ENCODE measurements at regions of chr1 and their contacts with region 1.

Region 1: GRCh38 chr1:207868774-207869721 is 41.9 kb downstream of the CD34 start:
- DNase-seq: peak; percentile 82
- ATAC-seq: peak; percentile 49
- H3K4me3 Mint-ChIP-seq: peak overlapping the region; percentile 90
- H3K27ac Mint-ChIP-seq: peak overlapping the region; percentile 94
- H3K4me1 Mint-ChIP-seq: peaks cover 84% of the 10 kb centered on the region
- H3K27me3 Mint-ChIP-seq: no peaks in the 10 kb centered on the region

Region 2: DNA sequence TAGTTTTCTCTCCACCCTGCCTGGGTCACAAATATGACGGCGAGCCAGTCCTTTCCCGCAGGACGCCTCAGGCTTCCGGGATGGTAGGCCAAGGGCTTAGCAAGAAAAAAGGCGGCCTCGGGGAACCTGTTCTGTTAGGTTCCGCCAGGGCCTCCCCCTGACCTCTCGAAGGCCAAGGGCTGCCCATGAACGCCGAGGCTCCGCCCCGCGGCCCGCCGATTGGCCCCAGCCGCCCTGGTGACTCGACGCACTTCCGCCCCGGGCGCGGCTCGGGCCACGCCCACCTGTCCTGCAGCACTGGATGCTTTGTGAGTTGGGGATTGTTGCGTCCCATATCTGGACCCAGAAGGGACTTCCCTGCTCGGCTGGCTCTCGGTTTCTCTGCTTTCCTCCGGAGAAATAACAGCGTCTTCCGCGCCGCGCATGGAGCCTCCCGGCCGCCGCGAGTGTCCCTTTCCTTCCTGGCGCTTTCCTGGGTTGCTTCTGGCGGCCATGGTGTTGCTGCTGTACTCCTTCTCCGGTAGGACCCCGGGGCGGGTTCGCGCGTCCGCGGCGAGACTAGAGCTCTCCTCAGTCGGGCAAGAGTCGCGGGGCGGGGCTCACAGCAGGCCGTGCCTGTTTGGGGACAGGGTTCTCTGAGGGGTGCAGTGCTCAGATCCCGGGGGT is 117.1 kb before region 1 on chr1 and contains the start of gene CD46:
- CTCF ChIA-PET with region 1: no interaction called
- POLR2A ChIA-PET with region 1: no interaction called
- intact Hi-C with region 1: loop called in 1 of 2 experiments (anchors 2 kb)
- DNase-seq: peak; percentile 97
- ATAC-seq: peak; percentile 97
- H3K4me3 Mint-ChIP-seq: peak within 1 kb of the TSS; percentile 99
- H3K27ac Mint-ChIP-seq: peak within 1 kb of the TSS; percentile 97
- H3K4me1 Mint-ChIP-seq: peaks cover 62% of the 10 kb centered on the region
- H3K27me3 Mint-ChIP-seq: no peaks in the 10 kb centered on the region
- total RNA-seq, gene CD46: 92.2 to 92.7 TPM

Region 3: GRCh38 chr1:207848234-207848633 is 20.8 kb before region 1 on chr1:
- CTCF ChIA-PET with region 1: interaction called, 5 read pairs
- POLR2A ChIA-PET with region 1: interaction called, 4 read pairs
- intact Hi-C with region 1: loop called in 1 of 2 experiments (anchors 2 kb)
- DNase-seq: peak; percentile 82
- ATAC-seq: peak; percentile 96
- H3K4me3 Mint-ChIP-seq: no peak overlapping the region
- H3K27ac Mint-ChIP-seq: peak overlapping the region; percentile 87
- H3K4me1 Mint-ChIP-seq: peaks cover 74% of the 10 kb centered on the region
- H3K27me3 Mint-ChIP-seq: no peaks in the 10 kb centered on the region

Region 4: GRCh38 chr1:207910591-207911354 is 41.7 kb after region 1 on chr1 and contains the start of gene CD34:
- CTCF ChIA-PET with region 1: interaction called, 5 read pairs
- POLR2A ChIA-PET with region 1: interaction called, 11 read pairs
- intact Hi-C with region 1: no loop called
- DNase-seq: peak; percentile 60
- ATAC-seq: peak; percentile 72
- H3K4me3 Mint-ChIP-seq: peak within 1 kb of the TSS; percentile 31
- H3K27ac Mint-ChIP-seq: no peak within 1 kb of the TSS
- H3K4me1 Mint-ChIP-seq: peaks cover 11% of the 10 kb centered on the region
- H3K27me3 Mint-ChIP-seq: peaks cover 56% of the 10 kb centered on the region
- total RNA-seq, gene CD34: 0.02 to 0.04 TPM

Region 5: GRCh38 chr1:209755926-209756614 is 1887.0 kb after region 1 on chr1 and contains the start of gene TRAF3IP3:
- CTCF ChIA-PET with region 1: no interaction called
- POLR2A ChIA-PET with region 1: no interaction called
- intact Hi-C with region 1: loop called in 1 of 2 experiments (anchors 10 kb)
- DNase-seq: peak; percentile 89
- ATAC-seq: peak; percentile 76
- H3K4me3 Mint-ChIP-seq: peak within 1 kb of the TSS; percentile 95
- H3K27ac Mint-ChIP-seq: peak within 1 kb of the TSS; percentile 99
- H3K4me1 Mint-ChIP-seq: peaks cover 75% of the 10 kb centered on the region
- H3K27me3 Mint-ChIP-seq: no peaks in the 10 kb centered on the region
- total RNA-seq, gene TRAF3IP3: 136 to 138 TPM

Measured in activated CD4-positive, alpha-beta T cell treated with anti-CD3 and anti-CD28 coated beads for 36 hours (primary cell).